K562 (cell line): ENCODE measurements at regions of chr15 and their contacts with region 1.

Region 1: GRCh38 chr15:96330450-96331145 is at the start of gene NR2F2:
- DNase-seq: peak; percentile 93 to 99 (median 96)
- ATAC-seq: peak; percentile 68
- H3K4me3 ChIP-seq: peak within 1 kb of the TSS; percentile 71
- H3K27ac ChIP-seq: peak within 1 kb of the TSS; percentile 94
- H3K4me1 ChIP-seq: peaks cover 29 to 36% of the 10 kb centered on the region in 2 experiments
- H3K27me3 ChIP-seq: no peaks in the 10 kb centered on the region
- CTCF ChIP-seq: no peak
- EP300 ChIP-seq: no peak; the same call in 1 of the 2 replicates
- POLR2A ChIP-seq: peak; percentile 86
- RAD21 ChIP-seq: 0 out of 4 replicates have a peak, but pooled peaks of 1 of the 2 experiments have one; percentile 12
- polyA plus RNA-seq, gene NR2F2: 9.7 to 11.1 TPM

Region 2: GRCh38 chr15:95284933-95285421 is 1045.6 kb before region 1 on chr15:
- CTCF ChIA-PET with region 1: no interaction called
- POLR2A ChIA-PET with region 1: no interaction called
- in situ Hi-C with region 1: no loop called
- intact Hi-C with region 1: loop called (anchors 10 kb)
- DNase-seq: peak in 2 of 4 experiments; percentile 21 to 47
- ATAC-seq: peak; percentile 72
- H3K4me3 ChIP-seq: no peak overlapping the region
- H3K27ac ChIP-seq: no peak overlapping the region
- H3K4me1 ChIP-seq: no peaks in the 10 kb centered on the region
- H3K27me3 ChIP-seq: peaks cover 2 to 4% of the 10 kb centered on the region in 2 experiments; a peak in 1 of 5 replicates
- CTCF ChIP-seq: peak; percentile 15 to 34 (median 25); a peak in 3 of 6 replicates
- EP300 ChIP-seq: no peak
- POLR2A ChIP-seq: no peak
- RAD21 ChIP-seq: peak; percentile 52 to 74

Region 3: DNA sequence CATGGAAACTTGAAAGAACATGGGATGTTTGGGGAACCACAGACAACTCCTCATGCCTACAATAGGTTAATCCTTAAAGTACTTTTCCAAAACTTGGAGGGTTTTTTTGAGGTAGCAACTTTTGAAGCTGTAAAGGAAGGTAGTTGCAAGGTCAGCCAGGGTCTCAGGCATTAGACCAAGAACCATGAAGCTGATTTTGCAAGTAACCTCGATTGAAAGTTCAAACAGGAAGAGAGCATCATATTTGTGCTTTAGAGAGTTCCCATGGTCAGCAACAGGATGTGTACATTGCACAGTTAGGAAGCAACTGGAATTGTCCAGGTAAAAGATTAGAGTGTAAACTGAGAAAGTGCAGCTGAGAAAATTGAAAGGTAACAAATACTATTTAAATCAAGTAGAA is 199.9 kb before region 1 on chr15:
- CTCF ChIA-PET with region 1: no interaction called
- POLR2A ChIA-PET with region 1: interaction called, 10 read pairs
- in situ Hi-C with region 1: no loop called
- intact Hi-C with region 1: loop called (anchors 5 kb)
- DNase-seq: no peak
- ATAC-seq: no peak
- H3K4me3 ChIP-seq: no peak overlapping the region
- H3K27ac ChIP-seq: no peak overlapping the region
- H3K4me1 ChIP-seq: peaks cover 0 to 9% of the 10 kb centered on the region in 2 experiments; a peak in 3 of 5 replicates
- H3K27me3 ChIP-seq: no peaks in the 10 kb centered on the region
- CTCF ChIP-seq: no peak
- EP300 ChIP-seq: no peak
- POLR2A ChIP-seq: no peak
- RAD21 ChIP-seq: no peak

Region 4: DNA sequence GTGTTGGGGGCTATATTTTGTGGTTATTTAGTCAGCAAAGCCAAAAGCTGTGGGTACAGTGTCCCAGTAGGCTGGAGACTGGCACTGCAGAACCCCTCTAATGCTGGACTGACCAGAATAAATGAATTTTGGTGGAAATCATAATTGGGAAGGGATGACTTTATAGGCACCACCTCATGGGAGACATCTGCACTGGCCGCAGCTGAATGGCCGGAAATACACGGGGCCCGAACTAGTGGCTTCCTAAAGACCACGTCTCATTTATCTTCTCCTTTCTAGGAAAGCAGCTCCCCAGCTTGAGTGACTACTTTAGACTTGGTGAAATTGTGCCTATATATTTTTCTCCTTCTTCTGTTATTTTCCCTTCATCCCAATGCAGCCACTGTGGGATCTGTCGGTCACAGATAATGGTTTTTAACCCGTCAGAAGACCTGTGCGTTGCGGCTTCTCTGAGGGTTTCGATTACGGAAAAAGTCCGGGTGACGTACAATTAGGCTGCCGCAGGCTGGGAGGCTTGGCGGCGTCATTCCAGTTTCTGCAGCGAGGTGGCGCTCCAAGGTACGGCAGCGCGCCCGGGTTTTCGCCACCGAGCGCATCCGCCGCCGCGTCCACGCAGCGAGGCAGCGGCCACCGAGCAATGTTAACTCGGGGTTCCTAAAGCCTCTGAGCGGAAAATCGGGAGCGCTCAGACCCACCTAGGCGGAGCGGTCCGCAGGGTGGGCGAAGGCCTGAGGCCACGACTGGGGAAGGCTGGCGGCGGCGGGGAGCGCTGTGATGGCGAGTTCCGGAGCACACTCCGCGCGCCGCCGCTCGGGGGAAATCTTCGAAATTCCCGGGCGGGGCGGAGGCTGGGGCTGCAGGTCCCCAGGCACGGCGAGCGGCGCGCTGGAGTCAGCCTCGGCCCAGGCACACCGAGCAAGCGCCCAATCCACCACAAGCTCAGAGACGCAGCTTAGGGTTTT is 26.2 kb after region 1 on chr15:
- CTCF ChIA-PET with region 1: no interaction called
- POLR2A ChIA-PET with region 1: interaction called, 5 read pairs
- in situ Hi-C with region 1: no loop called
- intact Hi-C with region 1: loop called (anchors 2 kb)
- DNase-seq: peak; percentile 83 to 93 (median 84)
- ATAC-seq: peak; percentile 93
- H3K4me3 ChIP-seq: peak overlapping the region; percentile 68
- H3K27ac ChIP-seq: peak overlapping the region; percentile 73
- H3K4me1 ChIP-seq: peaks cover 15 to 43% of the 10 kb centered on the region in 2 experiments
- H3K27me3 ChIP-seq: no peaks in the 10 kb centered on the region
- CTCF ChIP-seq: peak; percentile 91 to 97 (median 93)
- EP300 ChIP-seq: no peak; the same call in 1 of the 2 replicates
- POLR2A ChIP-seq: peak; percentile 78
- RAD21 ChIP-seq: peak; percentile 78 to 79

Region 5: DNA sequence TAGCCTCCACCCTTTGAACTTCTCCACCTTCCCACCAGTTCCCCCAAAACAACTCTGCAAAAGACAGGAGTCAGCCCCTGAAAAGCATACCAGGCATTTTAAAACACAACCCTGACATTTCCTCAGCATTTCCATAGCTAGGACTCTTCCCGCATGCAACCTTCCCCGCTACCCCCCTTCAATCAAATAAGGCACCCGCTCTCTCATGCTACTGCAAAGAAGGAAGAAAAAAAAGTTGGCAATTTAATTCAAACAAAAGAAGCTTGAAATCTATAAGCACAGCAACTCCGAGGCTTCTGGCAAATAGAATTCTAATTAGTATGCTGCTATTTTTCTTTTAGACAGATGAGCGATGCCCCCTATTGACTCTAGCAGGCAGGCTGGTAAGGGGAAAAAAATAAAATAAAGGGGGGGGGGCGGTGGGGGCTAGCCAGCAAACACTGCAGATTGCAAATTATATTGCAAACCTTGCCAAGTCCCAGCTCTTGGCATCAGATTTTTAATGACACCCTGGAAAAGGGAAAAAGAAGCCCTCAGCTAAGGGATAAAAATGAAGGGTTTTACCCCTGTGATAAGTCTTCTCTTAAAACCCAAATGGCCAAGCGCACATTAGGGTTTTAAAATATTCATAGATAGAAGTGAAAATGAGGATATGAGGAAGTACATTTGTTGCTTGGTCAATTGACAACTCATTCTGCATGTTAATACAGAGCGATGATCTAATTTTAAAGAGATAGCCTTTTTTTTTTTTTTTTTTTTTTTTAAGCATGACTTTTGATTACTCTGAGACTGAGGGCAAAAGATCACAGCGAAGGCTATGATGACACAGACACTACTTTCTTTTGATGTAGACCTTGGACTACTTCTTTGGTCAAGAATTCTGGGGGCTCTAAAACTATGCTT is 255.1 kb after region 1 on chr15:
- CTCF ChIA-PET with region 1: interaction called, 3 read pairs
- POLR2A ChIA-PET with region 1: no interaction called
- in situ Hi-C with region 1: no loop called
- intact Hi-C with region 1: loop called (anchors 2 kb)
- DNase-seq: peak in 2 of 4 experiments; percentile 17 to 21
- ATAC-seq: peak; percentile 60; the same call in 1 of the 3 replicates
- H3K4me3 ChIP-seq: no peak overlapping the region
- H3K27ac ChIP-seq: no peak overlapping the region
- H3K4me1 ChIP-seq: no peaks in the 10 kb centered on the region; a peak in 1 of 5 replicates
- H3K27me3 ChIP-seq: peaks cover 13 to 18% of the 10 kb centered on the region in 2 experiments
- CTCF ChIP-seq: peak; percentile 25 to 49 (median 40); a peak in 5 of 6 replicates
- EP300 ChIP-seq: no peak
- POLR2A ChIP-seq: no peak
- RAD21 ChIP-seq: peak; percentile 22 to 36; a peak in 3 of 4 replicates

Region 6: GRCh38 chr15:97759363-97759762 is 1428.8 kb after region 1 on chr15:
- CTCF ChIA-PET with region 1: no interaction called
- POLR2A ChIA-PET with region 1: no interaction called
- in situ Hi-C with region 1: no loop called
- intact Hi-C with region 1: loop called (anchors 10 kb)
- DNase-seq: peak in 1 of 4 experiments; percentile 15
- ATAC-seq: no peak
- H3K4me3 ChIP-seq: no peak overlapping the region
- H3K27ac ChIP-seq: no peak overlapping the region
- H3K4me1 ChIP-seq: no peaks in the 10 kb centered on the region
- H3K27me3 ChIP-seq: no peaks in the 10 kb centered on the region
- CTCF ChIP-seq: no peak
- EP300 ChIP-seq: no peak
- POLR2A ChIP-seq: no peak
- RAD21 ChIP-seq: no peak